ENCODE measurements at regions of chr3 and their contacts with region 1.

Region 1: GRCh38 chr3:52220380-52221026 is 4.9 kb downstream of the TLR9 start:
- DNase-seq: peak; percentile 87 to 88
- ATAC-seq: peak; percentile 50 to 65 (median 56)
- H3K4me3 ChIP-seq: no peak overlapping the region
- H3K27ac ChIP-seq: peak overlapping the region in 3 of 10 donors; percentile 13 to 24 (median 21)
- H3K4me1 ChIP-seq: peaks cover 17 to 68% (median 62%) of the 10 kb centered on the region in 9 donors
- H3K27me3 ChIP-seq: no peaks in the 10 kb centered on the region
- CTCF ChIP-seq: peak; percentile 87 to 94 (median 92)

Region 2: DNA sequence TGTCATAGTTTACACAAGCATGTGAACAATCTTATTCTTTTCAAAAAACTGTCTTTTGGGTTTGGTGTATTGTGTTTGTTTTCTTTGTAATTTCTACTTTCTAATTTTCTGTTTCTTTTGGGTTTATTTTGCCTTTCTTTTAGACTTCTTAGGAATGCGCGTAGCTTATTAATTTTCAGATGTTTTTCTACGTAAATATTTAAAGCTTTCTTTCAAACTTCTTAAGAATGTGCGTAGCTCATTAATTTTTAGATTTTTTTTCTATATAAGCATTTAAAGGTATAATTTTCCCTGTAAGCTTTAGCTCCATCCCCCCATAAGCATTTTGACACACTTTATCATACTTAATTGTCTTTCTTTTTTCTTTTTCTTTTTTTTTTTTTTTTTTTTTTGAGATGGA is 626.8 kb before region 1 on chr3:
- intact Hi-C with region 1: no loop called
- DNase-seq: no peak
- ATAC-seq: no peak
- H3K4me3 ChIP-seq: no peak overlapping the region
- H3K27ac ChIP-seq: no peak overlapping the region
- H3K4me1 ChIP-seq: peaks cover 0 to 7% (median 0%) of the 10 kb centered on the region in 9 donors
- H3K27me3 ChIP-seq: no peaks in the 10 kb centered on the region
- CTCF ChIP-seq: no peak

Region 3: GRCh38 chr3:52123106-52123725 is 97.3 kb before region 1 on chr3:
- intact Hi-C with region 1: no loop called
- DNase-seq: peak; percentile 77 to 83
- ATAC-seq: peak; percentile 69 to 89 (median 84)
- H3K4me3 ChIP-seq: no peak overlapping the region
- H3K27ac ChIP-seq: peak overlapping the region in 9 of 10 donors; percentile 41 to 91 (median 86)
- H3K4me1 ChIP-seq: peaks cover 15 to 50% (median 34%) of the 10 kb centered on the region in 9 donors
- H3K27me3 ChIP-seq: no peaks in the 10 kb centered on the region
- CTCF ChIP-seq: peak; percentile 93 to 99 (median 97)

Region 4: GRCh38 chr3:52181543-52181942 is 39.0 kb before region 1 on chr3:
- intact Hi-C with region 1: loop called in 1 of 10 experiments (anchors 5 kb)
- DNase-seq: no peak
- ATAC-seq: peak in 3 of 8 donors; percentile 8 to 32 (median 20)
- H3K4me3 ChIP-seq: no peak overlapping the region
- H3K27ac ChIP-seq: peak overlapping the region in 6 of 10 donors; percentile 15 to 89 (median 46)
- H3K4me1 ChIP-seq: peaks cover 4 to 41% (median 21%) of the 10 kb centered on the region in 9 donors
- H3K27me3 ChIP-seq: no peaks in the 10 kb centered on the region
- CTCF ChIP-seq: no peak

Region 5: DNA sequence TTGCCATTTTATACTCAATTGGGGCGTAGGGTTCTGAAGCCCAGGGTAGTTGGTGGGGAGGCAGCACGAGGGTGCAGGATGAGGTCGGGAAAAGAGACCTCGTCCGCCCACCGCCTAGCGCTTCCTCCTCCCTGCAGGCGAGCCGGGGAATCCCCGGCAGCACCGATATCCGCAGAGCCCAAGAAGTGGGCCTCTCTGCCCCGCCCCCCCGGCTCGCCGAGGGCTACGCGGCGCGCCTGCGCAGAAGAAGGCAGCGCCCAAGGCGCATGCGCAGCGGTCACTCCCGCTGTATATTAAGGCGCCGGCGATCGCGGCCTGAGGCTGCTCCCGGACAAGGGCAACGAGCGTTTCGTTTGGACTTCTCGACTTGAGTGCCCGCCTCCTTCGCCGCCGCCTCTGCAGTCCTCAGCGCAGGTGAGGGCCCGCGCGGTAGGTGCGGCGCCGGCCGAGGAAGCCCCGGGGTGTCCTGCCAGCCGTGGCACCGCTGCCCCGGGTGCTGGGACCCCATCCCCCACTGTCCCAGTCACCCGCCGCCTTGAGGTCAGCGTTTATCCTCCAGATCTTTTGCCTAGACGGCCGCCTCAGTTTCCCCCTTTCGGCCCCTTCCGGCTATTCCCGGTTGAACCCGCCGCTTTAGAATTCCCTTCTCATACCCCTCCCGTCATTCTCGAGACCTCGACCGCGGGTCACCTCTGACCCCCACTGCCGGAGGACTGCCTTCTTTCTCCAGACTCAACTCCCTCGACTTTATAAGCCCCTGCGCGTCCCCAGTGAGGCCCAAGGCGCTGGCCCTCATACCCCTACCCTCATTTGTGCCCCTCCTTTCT is 22.4 kb before region 1 on chr3 and contains the start of gene ALAS1:
- intact Hi-C with region 1: loop called in 1 of 10 experiments (anchors 2 kb)
- DNase-seq: peak; percentile 92 to 95
- ATAC-seq: peak; percentile 84 to 94 (median 93)
- H3K4me3 ChIP-seq: peak within 1 kb of the TSS; percentile 76 to 100 (median 90)
- H3K27ac ChIP-seq: peak within 1 kb of the TSS; percentile 78 to 96 (median 92)
- H3K4me1 ChIP-seq: peaks cover 16 to 84% (median 72%) of the 10 kb centered on the region in 9 donors
- H3K27me3 ChIP-seq: no peaks in the 10 kb centered on the region
- CTCF ChIP-seq: peak in 5 of 9 donors; percentile 8 to 34 (median 29)
- total RNA-seq, gene ALAS1: 117 to 233 (median 177) TPM

Region 6: DNA sequence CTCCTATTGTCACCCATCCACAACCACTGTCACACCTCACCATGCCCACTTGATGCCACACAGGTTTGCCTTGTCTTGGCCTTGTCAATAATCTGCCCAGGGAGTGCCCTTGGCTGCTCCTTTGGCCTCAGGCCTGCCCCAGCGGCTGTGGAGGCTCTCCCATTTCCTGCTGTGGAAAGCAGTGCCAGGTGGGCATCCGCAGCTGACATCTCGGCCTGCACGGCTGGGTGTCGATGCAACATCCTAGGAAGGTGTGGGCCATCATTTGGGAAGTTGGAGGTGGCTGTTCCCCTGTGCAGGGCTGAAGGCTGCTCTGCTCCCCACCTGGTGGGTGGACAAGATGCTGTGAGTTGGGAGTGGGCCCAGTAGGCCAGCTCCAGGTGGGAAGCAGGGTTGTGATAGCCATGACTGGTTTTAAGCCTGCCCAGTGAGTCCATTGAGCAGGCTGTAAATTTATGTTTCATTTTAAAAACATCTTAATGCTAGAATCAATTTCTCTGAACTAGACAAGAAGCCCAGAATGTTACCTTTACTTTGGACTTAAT is 108.1 kb after region 1 on chr3:
- intact Hi-C with region 1: no loop called
- DNase-seq: no peak
- ATAC-seq: no peak
- H3K4me3 ChIP-seq: no peak overlapping the region
- H3K27ac ChIP-seq: no peak overlapping the region
- H3K4me1 ChIP-seq: peaks cover 0 to 7% (median 3%) of the 10 kb centered on the region in 9 donors
- H3K27me3 ChIP-seq: no peaks in the 10 kb centered on the region
- CTCF ChIP-seq: no peak

Region 7: DNA sequence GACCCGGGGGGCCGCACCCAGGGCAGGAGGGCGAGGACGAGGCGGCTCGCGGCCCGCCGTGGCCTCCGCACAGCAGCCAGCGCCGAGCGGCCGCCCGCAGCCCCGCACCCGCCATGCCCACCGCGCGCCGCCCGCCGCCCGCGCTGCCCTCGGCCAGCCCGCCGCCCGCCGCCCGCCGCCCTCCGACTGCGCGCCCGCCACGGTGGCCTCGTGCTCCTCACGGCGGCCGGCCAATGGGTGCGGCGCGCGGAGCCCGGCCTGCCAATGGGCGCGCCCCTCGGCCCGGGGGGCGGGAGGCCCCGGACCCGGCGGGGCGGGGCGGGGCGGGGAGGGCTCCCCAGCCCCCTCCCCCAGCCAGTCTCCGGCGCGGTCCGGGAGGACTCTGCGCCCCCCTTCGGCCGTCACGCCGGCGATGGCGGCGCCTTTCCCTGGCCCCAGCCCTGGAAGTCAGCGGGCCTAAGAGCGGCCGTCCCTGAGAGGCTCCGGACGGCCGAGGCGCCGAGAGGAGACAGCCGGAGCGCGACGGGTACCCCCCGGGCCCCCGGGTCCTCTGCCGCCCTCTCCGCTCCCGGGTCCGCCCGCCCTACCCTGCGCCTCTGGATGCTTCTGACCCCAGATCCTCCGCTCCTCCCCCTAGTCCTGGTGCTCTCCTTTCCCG is 313.2 kb after region 1 on chr3 and contains the start of gene NT5DC2:
- intact Hi-C with region 1: no loop called
- DNase-seq: peak; percentile 60 to 82
- ATAC-seq: peak; percentile 1 to 46 (median 14)
- H3K4me3 ChIP-seq: peak within 1 kb of the TSS; percentile 58 to 73 (median 68)
- H3K27ac ChIP-seq: peak within 1 kb of the TSS; percentile 72 to 91 (median 85)
- H3K4me1 ChIP-seq: peaks cover 43 to 88% (median 73%) of the 10 kb centered on the region in 9 donors
- H3K27me3 ChIP-seq: no peaks in the 10 kb centered on the region
- CTCF ChIP-seq: peak in 3 of 9 donors; percentile 34 to 37 (median 37)
- total RNA-seq, gene NT5DC2: 25.1 to 108 (median 44.5) TPM